ENCODE measurements at regions of chr12 and their contacts with region 1.

Region 1: GRCh38 chr12:122500685-122501488 is at the start of gene ZCCHC8:
- DNase-seq: peak; percentile 93 to 98 (median 95)
- H3K4me3 ChIP-seq: peak within 1 kb of the TSS; percentile 55 to 80
- H3K4me3 Mint-ChIP-seq: peak within 1 kb of the TSS; percentile 90 to 98 (median 98)
- H3K27ac ChIP-seq: peak within 1 kb of the TSS; percentile 92
- H3K27ac Mint-ChIP-seq: peak within 1 kb of the TSS; percentile 85 to 99 (median 95)
- H3K4me1 ChIP-seq: peaks cover 44% of the 10 kb centered on the region
- H3K4me1 Mint-ChIP-seq: peaks cover 25 to 50% (median 37%) of the 10 kb centered on the region in 4 donors
- H3K27me3 ChIP-seq: no peaks in the 10 kb centered on the region
- H3K27me3 Mint-ChIP-seq: no peaks in the 10 kb centered on the region
- total RNA-seq, gene ZCCHC8: 52.0 to 59.9 TPM

Region 2: GRCh38 chr12:122244565-122245371 is 256.1 kb before region 1 on chr12:
- CTCF ChIA-PET with region 1: interaction called, 3 read pairs
- POLR2A ChIA-PET with region 1: interaction called, 12 read pairs
- intact Hi-C with region 1: no loop called
- DNase-seq: peak; percentile 64 to 76 (median 74)
- H3K4me3 ChIP-seq: peak overlapping the region; percentile 63 to 92
- H3K4me3 Mint-ChIP-seq: peak overlapping the region; percentile 90 to 95 (median 93)
- H3K27ac ChIP-seq: peak overlapping the region; percentile 67
- H3K27ac Mint-ChIP-seq: peak overlapping the region; percentile 94 to 97 (median 95)
- H3K4me1 ChIP-seq: peaks cover 46% of the 10 kb centered on the region
- H3K4me1 Mint-ChIP-seq: peaks cover 25 to 50% (median 38%) of the 10 kb centered on the region in 4 donors
- H3K27me3 ChIP-seq: no peaks in the 10 kb centered on the region
- H3K27me3 Mint-ChIP-seq: no peaks in the 10 kb centered on the region

Region 3: GRCh38 chr12:122471324-122472226 is 29.3 kb before region 1 on chr12:
- CTCF ChIA-PET with region 1: interaction called, 17 read pairs
- POLR2A ChIA-PET with region 1: interaction called, 9 read pairs
- intact Hi-C with region 1: no loop called
- DNase-seq: peak in 4 of 5 donors; percentile 59 to 65 (median 63)
- H3K4me3 ChIP-seq: no peak overlapping the region
- H3K4me3 Mint-ChIP-seq: no peak overlapping the region
- H3K27ac ChIP-seq: no peak overlapping the region
- H3K27ac Mint-ChIP-seq: peak overlapping the region in 4 of 7 donors; percentile 12 to 65 (median 22)
- H3K4me1 ChIP-seq: no peaks in the 10 kb centered on the region
- H3K4me1 Mint-ChIP-seq: peaks cover 4 to 11% (median 9%) of the 10 kb centered on the region in 4 donors
- H3K27me3 ChIP-seq: no peaks in the 10 kb centered on the region
- H3K27me3 Mint-ChIP-seq: no peaks in the 10 kb centered on the region

Region 4: DNA sequence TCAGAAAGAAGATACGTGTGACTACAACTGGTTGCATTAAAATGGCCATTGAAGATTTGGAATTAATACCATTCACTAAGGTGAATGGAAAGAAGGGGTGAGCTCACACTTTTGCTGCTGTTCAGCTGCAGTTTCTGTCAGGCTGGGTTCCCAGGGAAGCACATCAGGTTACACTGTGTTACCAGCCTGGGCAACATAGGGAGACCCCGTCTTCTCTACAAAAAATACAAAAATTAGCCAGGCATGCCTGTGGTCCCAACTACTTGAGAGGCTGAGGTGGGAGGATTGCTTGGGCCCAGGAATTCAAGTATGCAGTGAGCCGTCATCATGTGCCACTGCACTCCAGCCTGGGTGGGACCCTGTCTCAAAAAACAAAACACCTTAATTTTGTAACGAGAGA is 12.8 kb after region 1 on chr12:
- CTCF ChIA-PET with region 1: interaction called, 6 read pairs
- POLR2A ChIA-PET with region 1: interaction called, 43 read pairs
- intact Hi-C with region 1: no loop called
- DNase-seq: no peak
- H3K4me3 ChIP-seq: no peak overlapping the region
- H3K4me3 Mint-ChIP-seq: no peak overlapping the region
- H3K27ac ChIP-seq: no peak overlapping the region
- H3K27ac Mint-ChIP-seq: peak overlapping the region in 1 of 7 donors; percentile 31
- H3K4me1 ChIP-seq: no peaks in the 10 kb centered on the region
- H3K4me1 Mint-ChIP-seq: peaks cover 4 to 16% (median 10%) of the 10 kb centered on the region in 4 donors
- H3K27me3 ChIP-seq: no peaks in the 10 kb centered on the region
- H3K27me3 Mint-ChIP-seq: no peaks in the 10 kb centered on the region

Region 5: DNA sequence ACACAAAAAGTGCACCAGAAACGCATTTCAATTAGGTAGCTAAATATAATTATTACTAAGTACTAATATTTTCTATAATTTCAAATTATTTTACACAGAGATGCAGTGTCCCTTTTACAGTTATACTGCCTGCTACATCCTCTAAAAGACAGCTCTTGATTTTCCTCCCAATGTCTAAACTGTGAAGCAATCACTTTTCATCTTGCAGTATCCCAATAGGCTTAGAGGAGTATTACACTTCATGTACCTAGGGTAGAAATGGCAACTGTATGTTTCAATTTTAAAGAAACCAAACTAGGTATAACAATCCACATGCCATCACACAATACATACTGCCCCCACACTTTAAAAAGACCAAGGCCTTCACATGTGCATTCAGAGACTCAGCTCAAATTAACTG is 18.5 kb after region 1 on chr12:
- CTCF ChIA-PET with region 1: interaction called, 3 read pairs
- POLR2A ChIA-PET with region 1: interaction called, 224 read pairs
- intact Hi-C with region 1: no loop called
- DNase-seq: no peak
- H3K4me3 ChIP-seq: no peak overlapping the region
- H3K4me3 Mint-ChIP-seq: no peak overlapping the region
- H3K27ac ChIP-seq: no peak overlapping the region
- H3K27ac Mint-ChIP-seq: peak overlapping the region in 4 of 7 donors; percentile 33 to 75 (median 50)
- H3K4me1 ChIP-seq: peaks cover 36% of the 10 kb centered on the region
- H3K4me1 Mint-ChIP-seq: peaks cover 38 to 65% (median 50%) of the 10 kb centered on the region in 4 donors
- H3K27me3 ChIP-seq: no peaks in the 10 kb centered on the region
- H3K27me3 Mint-ChIP-seq: no peaks in the 10 kb centered on the region

Region 6: GRCh38 chr12:122526683-122527477 is 26.0 kb after region 1 on chr12 and contains the starts of genes KNTC1 and RSRC2:
- CTCF ChIA-PET with region 1: interaction called, 11 read pairs
- POLR2A ChIA-PET with region 1: interaction called, 224 read pairs
- intact Hi-C with region 1: loop called (anchors 1 kb)
- DNase-seq: peak; percentile 98 to 99 (median 99)
- H3K4me3 ChIP-seq: peak within 1 kb of the TSS; percentile 85 to 88
- H3K4me3 Mint-ChIP-seq: no peak within 1 kb of the TSS
- H3K27ac ChIP-seq: peak within 1 kb of the TSS; percentile 98
- H3K27ac Mint-ChIP-seq: no peak within 1 kb of the TSS
- H3K4me1 ChIP-seq: peaks cover 52% of the 10 kb centered on the region
- H3K4me1 Mint-ChIP-seq: peaks cover 22 to 37% (median 30%) of the 10 kb centered on the region in 4 donors
- H3K27me3 ChIP-seq: no peaks in the 10 kb centered on the region
- H3K27me3 Mint-ChIP-seq: no peaks in the 10 kb centered on the region
- total RNA-seq, gene KNTC1: 29.7 to 30.9 TPM
- total RNA-seq, gene RSRC2: 138 to 141 TPM

Region 7: GRCh38 chr12:122669397-122670070 is 168.6 kb after region 1 on chr12:
- CTCF ChIA-PET with region 1: no interaction called
- POLR2A ChIA-PET with region 1: no interaction called
- intact Hi-C with region 1: no loop called
- DNase-seq: no peak
- H3K4me3 ChIP-seq: no peak overlapping the region
- H3K4me3 Mint-ChIP-seq: no peak overlapping the region
- H3K27ac ChIP-seq: no peak overlapping the region
- H3K27ac Mint-ChIP-seq: no peak overlapping the region
- H3K4me1 ChIP-seq: no peaks in the 10 kb centered on the region
- H3K4me1 Mint-ChIP-seq: no peaks in the 10 kb centered on the region
- H3K27me3 ChIP-seq: no peaks in the 10 kb centered on the region
- H3K27me3 Mint-ChIP-seq: peaks cover 0 to 4% of the 10 kb centered on the region in 2 donors

Region 8: DNA sequence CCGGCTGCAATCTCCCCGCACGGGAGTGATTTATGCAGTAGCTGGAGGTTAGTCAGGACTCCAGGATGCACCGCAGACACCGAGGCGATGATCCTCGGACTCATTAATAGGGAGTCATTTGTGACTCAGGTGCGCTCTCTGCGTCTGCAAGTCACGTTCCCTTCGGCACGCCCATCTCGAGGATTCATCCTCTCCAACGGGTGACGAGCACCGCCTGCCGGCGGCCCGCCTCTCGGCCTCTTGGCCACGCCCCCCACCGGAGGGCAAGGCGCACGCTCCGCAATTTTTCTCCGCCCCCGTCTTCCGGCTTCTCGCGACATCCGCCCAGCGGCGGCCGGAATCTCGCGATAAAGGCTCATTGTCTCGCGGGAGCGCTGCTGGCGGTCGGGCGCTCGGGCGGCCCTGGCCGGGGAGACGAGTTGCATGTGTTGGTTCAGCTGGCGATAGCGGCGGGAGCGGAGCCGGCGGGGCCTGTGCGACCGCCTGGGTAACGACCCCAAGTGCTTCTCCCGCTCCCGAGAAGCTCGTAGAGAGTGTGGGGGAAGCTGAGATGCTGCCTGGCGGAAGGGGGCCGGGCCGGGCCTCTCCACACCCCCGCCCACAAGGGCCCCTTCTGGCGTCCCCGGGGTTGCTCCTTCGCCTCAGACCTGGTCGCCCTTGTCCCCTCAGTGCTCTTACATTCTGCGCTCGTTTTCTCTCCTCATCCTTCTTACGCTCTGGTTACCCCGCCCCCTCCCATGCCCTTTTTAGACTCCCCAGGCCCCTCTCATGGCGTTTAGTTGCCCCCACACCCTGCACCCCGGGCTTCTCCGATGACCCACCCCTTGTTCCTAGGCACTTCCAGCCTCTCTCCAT is 251.8 kb after region 1 on chr12 and contains the start of gene DENR:
- CTCF ChIA-PET with region 1: interaction called, 3 read pairs
- POLR2A ChIA-PET with region 1: interaction called, 14 read pairs
- intact Hi-C with region 1: loop called (anchors 1 kb)
- DNase-seq: peak; percentile 99 to 100 (median 99)
- H3K4me3 ChIP-seq: peak within 1 kb of the TSS; percentile 64 to 77
- H3K4me3 Mint-ChIP-seq: peak within 1 kb of the TSS; percentile 93 to 97 (median 94)
- H3K27ac ChIP-seq: peak within 1 kb of the TSS; percentile 87
- H3K27ac Mint-ChIP-seq: peak within 1 kb of the TSS; percentile 90 to 99 (median 97)
- H3K4me1 ChIP-seq: peaks cover 19% of the 10 kb centered on the region
- H3K4me1 Mint-ChIP-seq: peaks cover 35 to 60% (median 47%) of the 10 kb centered on the region in 4 donors
- H3K27me3 ChIP-seq: no peaks in the 10 kb centered on the region
- H3K27me3 Mint-ChIP-seq: no peaks in the 10 kb centered on the region
- total RNA-seq, gene DENR: 47.8 to 49.1 TPM

Region 9: GRCh38 chr12:122935318-122935717 is 434.4 kb after region 1 on chr12:
- CTCF ChIA-PET with region 1: no interaction called
- POLR2A ChIA-PET with region 1: no interaction called
- intact Hi-C with region 1: no loop called
- DNase-seq: no peak
- H3K4me3 ChIP-seq: no peak overlapping the region
- H3K4me3 Mint-ChIP-seq: no peak overlapping the region
- H3K27ac ChIP-seq: no peak overlapping the region
- H3K27ac Mint-ChIP-seq: no peak overlapping the region
- H3K4me1 ChIP-seq: no peaks in the 10 kb centered on the region
- H3K4me1 Mint-ChIP-seq: no peaks in the 10 kb centered on the region
- H3K27me3 ChIP-seq: no peaks in the 10 kb centered on the region
- H3K27me3 Mint-ChIP-seq: no peaks in the 10 kb centered on the region